H1 (cell line): ENCODE measurements at regions of chr2 and their contacts with region 1.

Region 1: DNA sequence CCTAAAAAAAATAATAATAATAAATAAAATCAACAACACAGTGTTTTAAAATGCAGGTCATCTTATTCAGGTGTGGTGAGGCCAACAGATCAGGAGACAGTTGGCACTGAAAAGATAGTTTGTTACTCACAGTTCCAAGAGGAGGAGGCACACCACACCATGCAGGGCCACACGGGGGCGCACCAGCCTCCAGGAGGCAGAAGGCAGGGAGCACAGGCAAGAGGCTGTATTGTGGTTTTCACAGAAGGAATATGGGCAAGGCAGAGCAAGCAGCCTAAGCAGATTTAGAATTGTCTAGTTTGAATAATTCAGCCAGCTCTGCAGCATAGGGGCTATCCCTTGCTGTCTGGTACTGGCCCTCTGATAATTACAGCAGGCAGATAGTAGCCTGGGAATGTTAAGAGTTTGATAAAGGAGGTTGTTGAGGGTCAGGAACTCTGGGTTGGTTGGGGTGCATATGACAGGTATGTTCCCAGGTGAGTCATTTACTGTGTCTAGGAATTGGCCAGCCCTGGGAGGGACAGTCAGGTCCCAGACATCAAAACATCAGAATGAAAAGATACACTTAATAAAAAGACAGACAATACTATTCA is 31.3 kb downstream of the KIAA2012 start:
- DNase-seq: peak; percentile 54 to 95
- H3K4me3 ChIP-seq: no peak overlapping the region
- H3K27ac ChIP-seq: no peak overlapping the region
- H3K4me1 ChIP-seq: peaks cover 0 to 9% (median 6%) of the 10 kb centered on the region in 4 experiments; a peak in 3 of 7 replicates
- H3K27me3 ChIP-seq: no peaks in the 10 kb centered on the region
- CTCF ChIP-seq: peak; percentile 89 to 97 (median 94)
- EP300 ChIP-seq: no peak
- POLR2A ChIP-seq: no peak
- RAD21 ChIP-seq: peak; percentile 81 to 86

Region 2: DNA sequence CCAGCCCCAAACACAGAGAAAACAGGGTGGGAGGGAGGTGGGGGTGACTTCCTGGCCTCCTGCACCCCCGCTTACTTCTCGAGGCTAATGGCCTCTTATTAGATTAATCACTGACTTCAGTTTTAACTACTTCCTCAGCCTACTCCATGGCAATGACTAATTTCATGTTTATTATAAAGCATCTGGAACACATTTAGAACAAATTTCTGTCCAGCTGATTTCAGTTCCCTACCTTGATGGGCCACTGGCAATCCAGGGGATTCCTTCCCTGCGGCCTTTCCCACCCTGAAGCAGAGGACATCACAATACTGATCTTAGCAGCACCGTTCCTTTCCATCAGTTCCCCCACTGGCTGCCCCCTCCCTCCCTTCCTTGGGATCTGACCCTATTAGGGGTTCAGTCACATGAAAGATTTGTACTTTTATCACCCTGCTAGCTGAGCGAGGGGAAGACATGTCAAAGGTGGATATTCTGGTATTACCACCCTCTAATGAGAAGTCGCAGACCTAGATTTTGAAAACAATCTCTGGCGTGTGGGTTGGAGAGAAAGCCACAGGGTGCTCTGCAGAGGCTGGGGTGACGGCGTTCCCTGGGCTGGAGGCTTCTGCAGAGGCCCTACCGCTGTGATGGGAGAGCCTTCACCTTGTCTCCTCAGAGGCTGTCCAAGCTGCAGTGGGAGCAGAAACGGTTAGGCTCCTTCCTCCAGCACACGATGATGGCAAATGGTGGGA is 36.3 kb after region 1 on chr2:
- CTCF ChIA-PET with region 1: interaction called, 12 read pairs
- POLR2A ChIA-PET with region 1: interaction called, 4 read pairs
- DNase-seq: no peak
- H3K4me3 ChIP-seq: no peak overlapping the region
- H3K27ac ChIP-seq: no peak overlapping the region
- H3K4me1 ChIP-seq: peaks cover 0 to 11% (median 2%) of the 10 kb centered on the region in 4 experiments; a peak in 4 of 7 replicates
- H3K27me3 ChIP-seq: no peaks in the 10 kb centered on the region
- CTCF ChIP-seq: no peak
- EP300 ChIP-seq: no peak
- POLR2A ChIP-seq: no peak
- RAD21 ChIP-seq: no peak

Region 3: GRCh38 chr2:202172439-202173211 is 68.3 kb after region 1 on chr2:
- CTCF ChIA-PET with region 1: interaction called, 43 read pairs
- POLR2A ChIA-PET with region 1: no interaction called
- DNase-seq: no peak
- H3K4me3 ChIP-seq: no peak overlapping the region
- H3K27ac ChIP-seq: no peak overlapping the region
- H3K4me1 ChIP-seq: peaks cover 0 to 7% (median 1%) of the 10 kb centered on the region in 4 experiments; a peak in 2 of 7 replicates
- H3K27me3 ChIP-seq: peaks cover 2 to 19% (median 14%) of the 10 kb centered on the region in 4 experiments; a peak in 5 of 7 replicates
- CTCF ChIP-seq: no peak
- EP300 ChIP-seq: no peak
- POLR2A ChIP-seq: no peak
- RAD21 ChIP-seq: no peak